ENCODE measurements at regions of chrX and their contacts with region 1.

Region 1: GRCh38 chrX:135476378-135476777 is 44.1 kb upstream of the INTS6L start:
- DNase-seq: no peak
- H3K4me3 ChIP-seq: no peak overlapping the region
- H3K27ac ChIP-seq: no peak overlapping the region
- H3K4me1 ChIP-seq: no peaks in the 10 kb centered on the region
- H3K27me3 ChIP-seq: no peaks in the 10 kb centered on the region
- CTCF ChIP-seq: no peak
- EP300 ChIP-seq: no peak
- RAD21 ChIP-seq: no peak

Region 2: GRCh38 chrX:135185795-135186443 is 290.5 kb before region 1 on chrX:
- CTCF ChIA-PET with region 1: interaction called, 10 read pairs
- POLR2A ChIA-PET with region 1: no interaction called
- DNase-seq: peak; percentile 57
- H3K4me3 ChIP-seq: no peak overlapping the region
- H3K27ac ChIP-seq: no peak overlapping the region
- H3K4me1 ChIP-seq: no peaks in the 10 kb centered on the region
- H3K27me3 ChIP-seq: peaks cover 19% of the 10 kb centered on the region
- CTCF ChIP-seq: peak; percentile 64
- EP300 ChIP-seq: no peak
- RAD21 ChIP-seq: peak; percentile 80

Measured in SK-N-SH (cell line).